Gastrocnemius medialis (tissue), 4 donors: ENCODE measurements at regions of chr20 and their contacts with region 1.

Region 1: GRCh38 chr20:42204203-42204942 is 586.2 kb upstream of the CHD6 start:
- DNase-seq: no peak
- ATAC-seq: no peak
- H3K4me3 ChIP-seq: no peak overlapping the region
- H3K27ac ChIP-seq: no peak overlapping the region
- H3K4me1 ChIP-seq: no peaks in the 10 kb centered on the region
- H3K27me3 ChIP-seq: no peaks in the 10 kb centered on the region
- CTCF ChIP-seq: no peak
- POLR2A ChIP-seq: no peak

Region 2: DNA sequence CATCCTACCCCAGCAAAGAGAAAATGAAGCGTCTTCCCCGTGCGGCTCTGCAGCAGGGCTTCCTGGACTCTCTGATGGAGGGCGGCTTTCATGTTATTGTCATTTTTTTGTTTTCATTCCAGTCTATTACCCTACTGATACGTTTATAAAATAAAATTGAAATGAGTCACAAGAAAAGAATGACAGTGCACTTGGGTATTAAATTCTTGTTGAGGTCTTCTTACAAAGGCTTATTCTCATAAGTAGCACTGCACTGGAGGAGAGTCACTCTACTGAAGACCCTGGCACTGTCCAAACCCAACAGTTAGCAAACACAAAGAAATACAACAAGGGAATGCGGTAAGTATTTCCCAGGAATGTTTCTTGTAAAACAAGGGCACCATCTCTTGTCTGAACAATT is 1894.6 kb before region 1 on chr20:
- in situ Hi-C with region 1: no loop called
- intact Hi-C with region 1: no loop called
- DNase-seq: no peak
- ATAC-seq: no peak
- H3K4me3 ChIP-seq: no peak overlapping the region
- H3K27ac ChIP-seq: no peak overlapping the region
- H3K4me1 ChIP-seq: peaks cover 19 to 36% of the 10 kb centered on the region in 2 donors
- H3K27me3 ChIP-seq: no peaks in the 10 kb centered on the region
- CTCF ChIP-seq: no peak
- POLR2A ChIP-seq: no peak

Region 3: GRCh38 chr20:42309050-42309449 is 104.7 kb after region 1 on chr20:
- in situ Hi-C with region 1: loop called in 1 of 4 experiments (anchors 25 kb)
- intact Hi-C with region 1: no loop called
- DNase-seq: no peak
- ATAC-seq: no peak
- H3K4me3 ChIP-seq: no peak overlapping the region
- H3K27ac ChIP-seq: no peak overlapping the region
- H3K4me1 ChIP-seq: no peaks in the 10 kb centered on the region
- H3K27me3 ChIP-seq: no peaks in the 10 kb centered on the region
- CTCF ChIP-seq: no peak
- POLR2A ChIP-seq: no peak

Region 4: DNA sequence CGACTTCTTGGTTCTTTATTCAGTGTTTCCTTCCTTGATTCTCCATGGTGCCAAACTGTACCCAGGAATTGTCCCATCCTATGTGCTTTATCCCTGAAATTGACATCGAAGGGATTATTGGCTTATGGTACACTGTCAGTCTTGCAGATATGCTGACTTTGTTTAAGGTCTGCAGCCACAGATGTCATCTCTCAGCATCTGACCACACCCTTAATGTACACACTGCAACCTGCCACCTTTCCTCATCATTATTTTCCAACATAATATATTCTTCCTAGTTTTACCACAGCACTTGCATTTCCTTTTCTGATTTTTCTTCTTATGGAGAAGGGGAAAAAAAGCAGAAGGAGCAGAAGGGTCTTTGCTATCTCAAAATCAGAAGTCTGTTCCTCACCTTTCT is 322.9 kb after region 1 on chr20:
- in situ Hi-C with region 1: loop called in 1 of 4 experiments (anchors 10 kb)
- intact Hi-C with region 1: no loop called
- DNase-seq: no peak
- ATAC-seq: no peak
- H3K4me3 ChIP-seq: no peak overlapping the region
- H3K27ac ChIP-seq: no peak overlapping the region
- H3K4me1 ChIP-seq: no peaks in the 10 kb centered on the region
- H3K27me3 ChIP-seq: no peaks in the 10 kb centered on the region
- CTCF ChIP-seq: no peak
- POLR2A ChIP-seq: no peak